ENCODE measurements at regions of chrX and their contacts with region 1.

Region 1: GRCh38 chrX:7132335-7133049 is 15.0 kb upstream of the STS start:
- DNase-seq: peak; percentile 81
- H3K4me3 Mint-ChIP-seq: peak overlapping the region; percentile 71
- H3K27ac Mint-ChIP-seq: peak overlapping the region; percentile 99
- H3K4me1 Mint-ChIP-seq: peaks cover 48% of the 10 kb centered on the region
- H3K27me3 Mint-ChIP-seq: no peaks in the 10 kb centered on the region
- CTCF ChIP-seq: peak; percentile 44

Region 2: DNA sequence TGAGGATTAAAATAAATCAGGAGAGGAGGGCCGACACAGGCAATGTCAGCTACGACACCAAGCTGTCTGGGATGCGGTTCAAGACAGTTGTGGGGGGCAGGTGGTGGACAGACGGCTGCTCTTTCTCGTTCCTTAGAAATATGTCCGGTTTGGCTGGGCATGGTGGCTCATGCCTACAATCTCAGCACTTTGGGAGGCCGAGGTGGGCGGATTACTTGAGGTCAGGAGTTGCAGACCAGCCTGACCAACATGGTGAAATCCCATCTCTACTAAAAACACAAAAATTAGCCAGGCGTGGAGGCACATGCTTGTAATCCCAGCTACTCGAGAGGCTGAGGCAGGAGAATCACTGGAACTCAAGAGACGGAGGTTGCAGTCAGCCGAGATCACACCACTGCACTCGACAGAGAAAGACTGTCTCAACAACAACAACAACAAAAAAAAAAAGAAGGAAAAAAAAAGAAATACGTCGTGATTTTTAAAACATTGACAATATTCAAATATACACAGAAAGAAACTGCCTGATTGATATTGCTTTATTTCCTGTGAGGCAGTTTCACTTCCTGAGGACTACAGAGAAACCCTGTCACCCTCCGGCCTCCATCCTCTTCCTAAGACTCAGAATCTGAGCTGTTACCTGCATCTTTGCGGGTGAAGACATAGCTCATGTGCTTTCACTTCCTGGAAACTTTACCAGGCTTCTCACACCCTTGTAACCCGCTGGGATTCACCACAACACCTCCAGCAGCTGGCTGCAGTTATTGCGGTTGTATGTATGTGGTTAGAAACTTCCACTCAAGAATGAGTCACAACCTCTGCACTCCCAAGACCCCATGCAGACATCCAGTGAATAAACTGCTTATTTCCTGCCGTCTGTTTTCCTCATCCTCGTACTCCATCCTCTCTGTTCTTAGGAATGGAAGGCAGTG is 48.8 kb before region 1 on chrX:
- CTCF ChIA-PET with region 1: no interaction called
- intact Hi-C with region 1: no loop called
- DNase-seq: peak; percentile 41
- H3K4me3 Mint-ChIP-seq: no peak overlapping the region
- H3K27ac Mint-ChIP-seq: peak overlapping the region; percentile 80
- H3K4me1 Mint-ChIP-seq: peaks cover 31% of the 10 kb centered on the region
- H3K27me3 Mint-ChIP-seq: no peaks in the 10 kb centered on the region
- CTCF ChIP-seq: no peak

Region 3: GRCh38 chrX:7147978-7148824 is 15.7 kb after region 1 on chrX and contains the start of gene PUDP:
- CTCF ChIA-PET with region 1: no interaction called
- intact Hi-C with region 1: loop called (anchors 2 kb)
- DNase-seq: peak; percentile 90
- H3K4me3 Mint-ChIP-seq: peak within 1 kb of the TSS; percentile 67
- H3K27ac Mint-ChIP-seq: peak within 1 kb of the TSS; percentile 39
- H3K4me1 Mint-ChIP-seq: peaks cover 24% of the 10 kb centered on the region
- H3K27me3 Mint-ChIP-seq: no peaks in the 10 kb centered on the region
- CTCF ChIP-seq: no peak
- total RNA-seq, gene PUDP: 30.6 and 36.6 TPM in 2 replicates

Region 4: DNA sequence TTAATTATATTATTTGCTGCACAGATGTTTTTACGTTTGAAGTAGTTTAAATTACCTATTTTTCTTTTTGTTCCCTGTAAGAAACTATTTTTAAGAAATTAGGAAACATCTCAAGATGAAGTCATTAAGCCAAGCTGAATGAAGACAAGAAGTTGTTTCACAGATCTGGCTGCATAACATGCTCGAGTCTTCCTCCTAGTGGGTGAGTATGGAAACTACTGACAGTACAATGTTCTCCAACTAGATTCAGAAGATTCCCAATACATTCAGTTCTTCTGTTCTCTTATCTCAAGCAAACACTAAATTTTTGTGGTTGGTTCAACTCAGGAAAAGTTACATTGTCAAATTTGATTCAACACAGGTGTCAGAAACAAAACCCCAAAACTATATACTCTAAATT is 453.6 kb after region 1 on chrX:
- CTCF ChIA-PET with region 1: interaction called, 3 read pairs
- intact Hi-C with region 1: loop called (anchors 5 kb)
- DNase-seq: peak; percentile 0
- H3K4me3 Mint-ChIP-seq: no peak overlapping the region
- H3K27ac Mint-ChIP-seq: no peak overlapping the region
- H3K4me1 Mint-ChIP-seq: no peaks in the 10 kb centered on the region
- H3K27me3 Mint-ChIP-seq: no peaks in the 10 kb centered on the region
- CTCF ChIP-seq: no peak

Measured in Calu3 (cell line).